ENCODE measurements at regions of chr4 and their contacts with region 1.

Region 1: DNA sequence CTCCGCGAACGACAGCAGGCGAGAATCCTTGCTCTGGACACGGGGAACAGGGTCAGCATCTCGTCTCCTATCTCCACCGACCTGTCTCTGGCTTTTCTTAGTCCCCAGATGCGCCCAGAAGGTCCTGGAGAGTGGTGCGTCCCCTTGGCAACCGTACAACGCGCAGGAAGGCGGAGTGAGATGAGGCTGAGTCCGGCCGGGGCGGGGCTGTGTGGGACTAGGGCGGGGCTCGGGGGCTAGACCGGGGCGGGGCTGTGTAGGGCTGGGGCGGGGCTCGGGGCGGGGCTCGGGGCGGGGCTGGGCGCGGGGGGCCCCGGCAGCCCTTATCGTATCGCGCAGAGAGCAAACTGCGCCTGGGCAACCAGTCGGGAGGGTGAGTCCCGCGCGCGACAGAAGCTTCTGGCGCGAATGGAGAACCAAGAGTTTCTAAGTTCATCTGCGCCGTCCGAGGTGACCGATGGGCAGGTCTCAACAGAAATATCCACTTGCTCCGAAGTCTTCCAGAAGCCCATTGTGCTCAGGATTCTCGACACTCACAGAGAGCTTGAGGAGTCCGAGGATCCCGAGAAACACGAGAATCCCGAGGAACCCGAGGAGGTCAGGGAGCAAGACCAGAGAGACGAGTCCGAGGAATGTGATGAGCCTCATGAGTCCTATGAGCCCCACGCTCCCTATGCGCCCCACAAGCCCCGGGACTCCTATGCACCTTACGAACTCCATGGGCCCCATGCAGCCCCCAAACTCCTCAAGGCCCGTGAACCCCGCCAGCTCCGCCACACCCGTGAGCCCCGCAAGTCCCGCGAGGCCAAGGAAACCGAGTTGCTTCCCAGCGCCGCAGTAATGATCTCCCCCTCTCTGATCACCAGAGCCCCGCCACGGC is 24.9 kb downstream of the ARL9 start:
- DNase-seq: peak; percentile 64 to 89 (median 74)
- ATAC-seq: peak; percentile 96
- H3K4me3 ChIP-seq: peak overlapping the region; percentile 82
- H3K4me3 Mint-ChIP-seq: peak overlapping the region; percentile 79
- H3K27ac ChIP-seq: no peak overlapping the region
- H3K27ac Mint-ChIP-seq: no peak overlapping the region
- H3K4me1 ChIP-seq: peaks cover 18% of the 10 kb centered on the region
- H3K4me1 Mint-ChIP-seq: no peaks in the 10 kb centered on the region
- H3K27me3 ChIP-seq: peaks cover 17 to 23% of the 10 kb centered on the region in 2 experiments
- H3K27me3 Mint-ChIP-seq: no peaks in the 10 kb centered on the region
- CTCF ChIP-seq: no peak

Region 2: DNA sequence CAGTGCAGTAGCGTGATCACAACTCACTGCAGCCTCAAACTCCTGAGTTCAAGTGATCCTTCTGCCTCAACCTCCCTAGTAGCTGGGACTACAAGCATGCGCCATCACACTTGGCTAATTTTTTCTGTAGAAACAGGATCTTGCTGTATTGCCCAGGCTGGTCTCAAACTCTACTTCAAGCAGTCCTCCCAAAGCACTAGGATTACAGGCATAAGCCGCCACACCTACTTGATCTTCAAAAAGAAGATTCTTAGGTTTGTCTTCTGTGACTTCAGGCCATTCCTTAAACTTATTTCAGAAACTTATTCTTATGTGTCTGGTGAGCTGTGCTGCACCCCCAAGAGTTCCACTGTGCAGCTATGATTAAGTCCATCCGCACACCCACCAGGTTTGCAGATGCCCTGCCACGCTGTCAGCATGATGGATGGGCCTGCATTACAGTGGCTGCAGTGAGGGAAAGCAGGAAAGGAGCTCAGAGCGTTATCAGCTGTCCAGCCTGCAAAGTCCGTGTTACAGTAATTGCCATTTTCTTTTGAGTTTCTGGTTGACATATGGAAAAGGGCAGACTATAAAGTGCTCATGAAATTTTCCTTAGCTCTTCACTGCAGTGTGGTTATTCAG is 289.8 kb before region 1 on chr4:
- CTCF ChIA-PET with region 1: no interaction called
- POLR2A ChIA-PET with region 1: no interaction called
- intact Hi-C with region 1: no loop called
- DNase-seq: no peak
- ATAC-seq: no peak
- H3K4me3 ChIP-seq: no peak overlapping the region
- H3K4me3 Mint-ChIP-seq: no peak overlapping the region
- H3K27ac ChIP-seq: no peak overlapping the region
- H3K27ac Mint-ChIP-seq: no peak overlapping the region
- H3K4me1 ChIP-seq: no peaks in the 10 kb centered on the region
- H3K4me1 Mint-ChIP-seq: no peaks in the 10 kb centered on the region
- H3K27me3 ChIP-seq: peaks cover 0 to 3% of the 10 kb centered on the region in 2 experiments
- H3K27me3 Mint-ChIP-seq: peaks cover 5% of the 10 kb centered on the region
- CTCF ChIP-seq: no peak

Region 3: DNA sequence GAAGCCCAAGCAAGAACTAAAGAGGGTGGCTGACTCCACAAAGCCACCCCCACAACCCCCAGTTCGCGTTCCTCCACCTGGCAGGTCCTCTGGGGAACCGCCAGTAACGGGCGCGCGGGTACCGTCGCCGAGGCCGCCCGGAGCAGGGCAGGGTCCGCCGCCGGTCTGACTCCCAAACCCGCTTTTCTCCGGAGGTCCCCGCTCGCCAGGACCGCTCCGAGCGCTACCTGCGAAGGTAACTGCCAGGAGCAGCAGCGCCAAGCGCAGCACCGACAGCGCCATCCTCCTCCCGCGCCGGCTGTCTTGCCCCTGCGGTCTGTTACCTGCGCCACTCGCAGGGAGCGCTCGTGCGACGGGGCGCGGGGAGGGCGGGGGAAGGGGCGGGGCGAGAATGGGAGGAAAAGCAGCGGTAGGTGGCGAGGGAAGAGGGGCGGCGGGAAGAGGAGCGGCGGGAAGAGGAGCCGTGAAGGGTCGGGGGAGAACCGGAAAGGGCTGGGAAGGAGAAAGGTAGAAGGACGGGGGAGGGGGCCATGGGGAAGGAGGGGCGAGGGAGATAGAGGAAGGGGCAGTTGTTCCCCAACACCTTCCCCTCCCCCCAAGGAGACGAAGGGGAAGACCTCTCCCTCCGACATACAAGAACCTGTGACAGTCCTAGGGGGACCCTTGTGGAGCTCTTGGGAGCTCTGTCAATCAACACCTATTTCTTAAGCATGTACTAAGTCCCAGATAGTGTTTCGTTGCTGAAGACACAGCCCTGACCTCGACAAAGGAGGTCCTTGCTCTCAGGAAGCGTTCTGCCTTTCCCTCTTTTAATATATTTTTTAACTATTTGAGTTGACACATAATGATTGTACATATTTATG is 291.1 kb after region 1 on chr4 and contains the start of gene SPINK2:
- CTCF ChIA-PET with region 1: no interaction called
- POLR2A ChIA-PET with region 1: no interaction called
- intact Hi-C with region 1: loop called in 1 of 2 experiments (anchors 5 kb)
- DNase-seq: peak; percentile 53 to 90 (median 71)
- ATAC-seq: peak; percentile 96
- H3K4me3 ChIP-seq: peak within 1 kb of the TSS; percentile 63
- H3K4me3 Mint-ChIP-seq: peak within 1 kb of the TSS; percentile 85
- H3K27ac ChIP-seq: no peak within 1 kb of the TSS
- H3K27ac Mint-ChIP-seq: peak within 1 kb of the TSS; percentile 76
- H3K4me1 ChIP-seq: peaks cover 33% of the 10 kb centered on the region
- H3K4me1 Mint-ChIP-seq: peaks cover 36% of the 10 kb centered on the region
- H3K27me3 ChIP-seq: no peaks in the 10 kb centered on the region
- H3K27me3 Mint-ChIP-seq: no peaks in the 10 kb centered on the region
- CTCF ChIP-seq: peak; percentile 48
- total RNA-seq, gene SPINK2: 4.0 to 5.2 TPM